ENCODE measurements at regions of chr16 and their contacts with region 1.

Region 1: DNA sequence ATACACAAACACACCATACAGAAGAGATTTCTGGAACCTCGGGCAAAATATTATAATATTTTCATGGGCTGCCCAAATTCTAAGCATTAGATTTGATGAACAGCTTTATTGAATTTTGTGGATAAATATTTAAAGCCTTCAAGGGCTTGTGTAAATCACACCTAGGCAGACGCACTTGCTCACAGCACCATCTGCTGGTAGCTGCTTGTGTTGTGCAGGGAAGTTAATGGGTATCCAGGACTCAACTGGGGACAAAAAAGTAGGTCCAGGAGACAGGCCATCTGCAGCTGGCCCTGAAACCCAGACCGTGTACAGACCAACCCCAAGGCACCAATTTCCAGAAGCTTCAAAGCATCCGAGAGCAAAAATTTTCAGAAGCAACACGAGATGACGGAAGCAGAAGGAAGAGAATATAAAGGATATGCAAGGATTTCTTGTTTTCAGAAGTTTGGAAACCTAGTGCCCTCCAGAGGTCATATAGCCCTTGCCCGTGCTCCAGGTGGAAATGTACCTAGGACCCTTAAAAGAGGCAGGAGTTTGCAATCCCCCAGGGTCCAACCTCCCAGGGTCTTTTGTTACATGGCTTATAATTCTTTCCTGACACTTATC is 140.0 kb downstream of the CHD9NB start:
- DNase-seq: peak; percentile 82
- H3K4me3 Mint-ChIP-seq: no peak overlapping the region
- H3K27ac Mint-ChIP-seq: no peak overlapping the region
- H3K4me1 Mint-ChIP-seq: peaks cover 7% of the 10 kb centered on the region
- H3K27me3 Mint-ChIP-seq: no peaks in the 10 kb centered on the region
- CTCF ChIP-seq: peak; percentile 89

Region 2: GRCh38 chr16:52433643-52434042 is 479.0 kb before region 1 on chr16:
- CTCF ChIA-PET with region 1: no interaction called
- intact Hi-C with region 1: no loop called
- DNase-seq: no peak
- H3K4me3 Mint-ChIP-seq: no peak overlapping the region
- H3K27ac Mint-ChIP-seq: no peak overlapping the region
- H3K4me1 Mint-ChIP-seq: peaks cover 2% of the 10 kb centered on the region
- H3K27me3 Mint-ChIP-seq: no peaks in the 10 kb centered on the region
- CTCF ChIP-seq: no peak

Region 3: GRCh38 chr16:52456368-52456767 is 456.3 kb before region 1 on chr16:
- CTCF ChIA-PET with region 1: no interaction called
- intact Hi-C with region 1: loop called (anchors 2 kb)
- DNase-seq: peak; percentile 87
- H3K4me3 Mint-ChIP-seq: peak overlapping the region; percentile 44
- H3K27ac Mint-ChIP-seq: peak overlapping the region; percentile 64
- H3K4me1 Mint-ChIP-seq: peaks cover 74% of the 10 kb centered on the region
- H3K27me3 Mint-ChIP-seq: no peaks in the 10 kb centered on the region
- CTCF ChIP-seq: no peak

Region 4: DNA sequence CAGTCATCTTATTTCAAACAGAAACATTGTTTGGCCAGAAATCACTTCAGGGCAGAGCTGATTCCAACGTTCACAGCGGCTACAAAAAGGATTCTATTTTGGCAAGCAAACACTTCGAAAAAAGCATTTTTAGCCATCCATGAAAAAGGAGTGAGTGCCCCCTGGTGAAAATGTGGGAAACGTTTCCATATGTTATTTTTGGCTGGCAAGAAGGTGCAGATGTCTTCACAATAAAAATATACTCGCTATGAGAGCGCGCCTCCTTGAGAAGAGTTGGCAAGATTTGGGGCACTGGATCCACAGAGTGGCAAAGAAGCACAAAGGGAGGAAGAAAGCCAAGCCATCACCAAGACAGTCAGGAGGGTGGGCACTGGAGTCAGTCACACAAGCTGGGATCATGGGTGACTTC is 51.1 kb before region 1 on chr16:
- CTCF ChIA-PET with region 1: interaction called, 4 read pairs
- intact Hi-C with region 1: loop called (anchors 5 kb)
- DNase-seq: peak; percentile 61
- H3K4me3 Mint-ChIP-seq: no peak overlapping the region
- H3K27ac Mint-ChIP-seq: no peak overlapping the region
- H3K4me1 Mint-ChIP-seq: peaks cover 36% of the 10 kb centered on the region
- H3K27me3 Mint-ChIP-seq: no peaks in the 10 kb centered on the region
- CTCF ChIP-seq: peak; percentile 48

Region 5: GRCh38 chr16:52993179-52993578 is 80.5 kb after region 1 on chr16:
- CTCF ChIA-PET with region 1: no interaction called
- intact Hi-C with region 1: no loop called
- DNase-seq: no peak
- H3K4me3 Mint-ChIP-seq: no peak overlapping the region
- H3K27ac Mint-ChIP-seq: no peak overlapping the region
- H3K4me1 Mint-ChIP-seq: no peaks in the 10 kb centered on the region
- H3K27me3 Mint-ChIP-seq: no peaks in the 10 kb centered on the region
- CTCF ChIP-seq: no peak

Region 6: GRCh38 chr16:53007095-53007494 is 94.4 kb after region 1 on chr16:
- CTCF ChIA-PET with region 1: no interaction called
- intact Hi-C with region 1: no loop called
- DNase-seq: no peak
- H3K4me3 Mint-ChIP-seq: no peak overlapping the region
- H3K27ac Mint-ChIP-seq: no peak overlapping the region
- H3K4me1 Mint-ChIP-seq: no peaks in the 10 kb centered on the region
- H3K27me3 Mint-ChIP-seq: peaks cover 56% of the 10 kb centered on the region
- CTCF ChIP-seq: no peak